AG04450 (cell line): ENCODE measurements at regions of chr2 and their contacts with region 1.

Region 1: GRCh38 chr2:224778474-224778877 is 62.3 kb upstream of the CCDC195 start:
- DNase-seq: peak; percentile 39
- H3K4me3 ChIP-seq: no peak overlapping the region
- H3K27ac ChIP-seq: no peak overlapping the region
- H3K27me3 ChIP-seq: no peaks in the 10 kb centered on the region
- CTCF ChIP-seq: peak; percentile 78

Region 2: DNA sequence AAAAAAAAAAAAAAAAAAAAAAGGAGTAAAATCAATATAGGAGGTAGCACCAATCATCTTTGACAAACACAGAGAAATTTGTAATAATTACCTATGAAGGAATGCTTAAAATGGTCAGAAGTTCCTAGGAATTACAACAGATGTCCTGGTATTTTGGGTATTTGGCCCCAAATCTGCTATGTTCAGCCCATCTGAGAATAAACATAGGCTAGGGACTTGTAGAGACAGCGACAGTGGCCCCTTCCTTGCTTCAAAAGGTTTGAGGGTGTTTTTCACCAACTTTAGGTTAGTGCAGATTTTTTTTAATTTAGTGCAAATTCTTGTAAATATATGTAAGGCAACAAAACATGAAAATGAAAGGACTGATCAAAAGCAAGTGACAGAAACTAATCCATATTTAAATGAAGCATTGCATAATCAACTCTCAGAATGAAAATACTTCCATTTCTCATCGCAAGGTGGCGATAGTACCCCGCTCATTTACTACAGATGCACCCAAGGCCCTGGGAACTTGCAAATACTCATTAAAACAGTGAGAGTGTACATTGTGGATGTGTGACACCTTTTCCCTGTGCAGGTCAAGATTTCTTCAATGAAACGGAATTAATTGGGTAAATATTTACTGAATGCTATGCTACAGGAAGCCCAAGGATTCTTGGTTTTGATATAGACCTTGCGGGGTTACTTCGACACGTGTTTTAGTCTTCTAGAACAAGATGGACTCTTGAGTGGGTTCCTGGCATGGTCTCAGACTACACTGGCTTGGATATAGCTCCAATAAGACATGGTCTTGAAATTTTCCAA is 421.2 kb before region 1 on chr2:
- CTCF ChIA-PET with region 1: interaction called, 13 read pairs
- POLR2A ChIA-PET with region 1: no interaction called
- DNase-seq: peak; percentile 30
- H3K4me3 ChIP-seq: no peak overlapping the region
- H3K27ac ChIP-seq: no peak overlapping the region
- H3K27me3 ChIP-seq: peaks cover 2% of the 10 kb centered on the region
- CTCF ChIP-seq: peak; percentile 74

Region 3: GRCh38 chr2:224757934-224758548 is 20.4 kb before region 1 on chr2:
- CTCF ChIA-PET with region 1: interaction called, 10 read pairs
- POLR2A ChIA-PET with region 1: no interaction called
- DNase-seq: no peak
- H3K4me3 ChIP-seq: no peak overlapping the region
- H3K27ac ChIP-seq: no peak overlapping the region
- H3K27me3 ChIP-seq: no peaks in the 10 kb centered on the region
- CTCF ChIP-seq: no peak